ENCODE measurements at regions of chr3 and their contacts with region 1.

Region 1: GRCh38 chr3:102174312-102174712 is 260.5 kb upstream of the ZPLD1 start:
- DNase-seq: peak; percentile 91
- ATAC-seq: peak; percentile 82
- H3K4me3 ChIP-seq: 0 out of 2 replicates have a peak overlapping the region, but pooled peaks have one; percentile 7
- H3K27ac ChIP-seq: peak overlapping the region; percentile 97
- H3K4me1 ChIP-seq: peaks cover 42% of the 10 kb centered on the region
- H3K27me3 ChIP-seq: no peaks in the 10 kb centered on the region
- CTCF ChIP-seq: no peak

Region 2: GRCh38 chr3:101868534-101869464 is 305.5 kb before region 1 on chr3:
- CTCF ChIA-PET with region 1: no interaction called
- POLR2A ChIA-PET with region 1: no interaction called
- intact Hi-C with region 1: loop called (anchors 2 kb)
- DNase-seq: peak; percentile 47
- ATAC-seq: no peak
- H3K4me3 ChIP-seq: no peak overlapping the region
- H3K27ac ChIP-seq: peak overlapping the region; percentile 15
- H3K4me1 ChIP-seq: peaks cover 47% of the 10 kb centered on the region
- H3K27me3 ChIP-seq: no peaks in the 10 kb centered on the region
- CTCF ChIP-seq: no peak

Region 3: DNA sequence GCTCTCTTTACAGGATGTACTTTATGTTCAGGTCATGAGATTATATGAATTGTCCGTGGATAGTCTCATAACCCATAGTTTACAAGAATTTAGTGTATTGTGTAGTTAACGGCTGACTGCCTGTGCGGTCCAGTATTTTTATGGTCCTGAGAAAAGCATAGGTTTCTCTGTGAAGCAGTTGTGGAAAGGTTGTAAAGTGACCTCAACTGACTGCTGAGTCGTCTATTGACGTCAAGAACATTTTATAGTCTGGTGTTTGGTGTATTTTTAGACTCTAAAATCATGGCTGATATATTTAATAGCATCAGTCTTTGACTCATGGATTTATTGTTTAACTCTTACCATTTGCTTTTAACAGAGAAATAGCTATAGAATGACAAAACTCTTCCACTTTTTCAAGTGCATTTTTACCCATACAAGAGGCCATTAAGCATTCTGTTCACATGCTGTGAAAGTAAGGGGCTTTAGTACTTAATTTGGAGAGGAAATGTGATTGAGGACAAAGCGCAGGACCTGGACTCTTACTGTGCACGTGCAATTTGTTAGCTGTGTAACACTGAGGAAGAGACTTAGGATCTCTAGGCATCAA is 84.3 kb before region 1 on chr3:
- CTCF ChIA-PET with region 1: interaction called, 3 read pairs
- POLR2A ChIA-PET with region 1: no interaction called
- intact Hi-C with region 1: loop called (anchors 1 kb)
- DNase-seq: peak; percentile 89
- ATAC-seq: peak; percentile 89
- H3K4me3 ChIP-seq: no peak overlapping the region
- H3K27ac ChIP-seq: peak overlapping the region; percentile 97
- H3K4me1 ChIP-seq: peaks cover 30% of the 10 kb centered on the region
- H3K27me3 ChIP-seq: no peaks in the 10 kb centered on the region
- CTCF ChIP-seq: no peak

Region 4: GRCh38 chr3:102136183-102136582 is 38.1 kb before region 1 on chr3:
- CTCF ChIA-PET with region 1: no interaction called
- POLR2A ChIA-PET with region 1: interaction called, 4 read pairs
- intact Hi-C with region 1: loop called (anchors 1 kb)
- DNase-seq: peak; percentile 84
- ATAC-seq: peak; percentile 94
- H3K4me3 ChIP-seq: peak overlapping the region; percentile 39; the same call in 1 of the 2 replicates
- H3K27ac ChIP-seq: peak overlapping the region; percentile 94
- H3K4me1 ChIP-seq: peaks cover 18% of the 10 kb centered on the region
- H3K27me3 ChIP-seq: no peaks in the 10 kb centered on the region
- CTCF ChIP-seq: no peak

Region 5: DNA sequence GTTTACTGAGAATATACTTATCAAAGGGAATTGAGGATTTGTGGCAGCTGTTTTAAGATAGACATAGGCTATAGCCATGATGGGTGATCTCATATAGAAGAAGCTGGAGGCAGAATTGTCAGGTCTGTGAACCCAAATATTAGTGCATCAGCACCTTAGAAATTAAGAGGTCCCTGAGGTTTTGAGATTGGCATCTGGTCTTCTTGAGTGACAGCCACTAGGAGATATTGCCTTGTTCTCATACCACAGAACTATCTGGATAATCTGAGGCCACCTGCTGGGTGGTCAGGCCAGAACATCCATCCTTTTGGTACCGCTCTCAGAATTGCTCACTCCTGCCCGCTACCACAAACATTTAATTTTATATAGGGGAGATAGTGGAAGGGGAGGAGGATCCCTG is 49.8 kb after region 1 on chr3:
- CTCF ChIA-PET with region 1: interaction called, 21 read pairs
- POLR2A ChIA-PET with region 1: interaction called, 9 read pairs
- intact Hi-C with region 1: loop called (anchors 1 kb)
- DNase-seq: peak; percentile 70
- ATAC-seq: peak; percentile 42
- H3K4me3 ChIP-seq: no peak overlapping the region
- H3K27ac ChIP-seq: peak overlapping the region; percentile 83
- H3K4me1 ChIP-seq: peaks cover 32% of the 10 kb centered on the region
- H3K27me3 ChIP-seq: no peaks in the 10 kb centered on the region
- CTCF ChIP-seq: peak; percentile 81

Region 6: GRCh38 chr3:102646557-102646956 is 472.2 kb after region 1 on chr3:
- CTCF ChIA-PET with region 1: no interaction called
- POLR2A ChIA-PET with region 1: no interaction called
- intact Hi-C with region 1: no loop called
- DNase-seq: no peak
- ATAC-seq: no peak
- H3K4me3 ChIP-seq: no peak overlapping the region
- H3K27ac ChIP-seq: no peak overlapping the region
- H3K4me1 ChIP-seq: no peaks in the 10 kb centered on the region
- H3K27me3 ChIP-seq: peaks cover 28% of the 10 kb centered on the region
- CTCF ChIP-seq: no peak